ENCODE measurements at regions of chr12 and their contacts with region 1.

Region 1: GRCh38 chr12:105775343-105775742 is 363.4 kb downstream of the NUAK1 start:
- DNase-seq: no peak
- H3K4me3 ChIP-seq: no peak overlapping the region
- H3K4me3 Mint-ChIP-seq: no peak overlapping the region
- H3K27ac Mint-ChIP-seq: no peak overlapping the region
- H3K4me1 ChIP-seq: no peaks in the 10 kb centered on the region
- H3K4me1 Mint-ChIP-seq: no peaks in the 10 kb centered on the region
- H3K27me3 ChIP-seq: no peaks in the 10 kb centered on the region
- H3K27me3 Mint-ChIP-seq: no peaks in the 10 kb centered on the region
- CTCF ChIP-seq: no peak

Region 2: GRCh38 chr12:105741744-105742566 is 33.4 kb before region 1 on chr12:
- CTCF ChIA-PET with region 1: no interaction called
- POLR2A ChIA-PET with region 1: no interaction called
- intact Hi-C with region 1: no loop called
- DNase-seq: no peak
- H3K4me3 ChIP-seq: no peak overlapping the region
- H3K4me3 Mint-ChIP-seq: no peak overlapping the region
- H3K27ac Mint-ChIP-seq: no peak overlapping the region
- H3K4me1 ChIP-seq: no peaks in the 10 kb centered on the region
- H3K4me1 Mint-ChIP-seq: no peaks in the 10 kb centered on the region
- H3K27me3 ChIP-seq: no peaks in the 10 kb centered on the region
- H3K27me3 Mint-ChIP-seq: no peaks in the 10 kb centered on the region
- CTCF ChIP-seq: no peak

Region 3: DNA sequence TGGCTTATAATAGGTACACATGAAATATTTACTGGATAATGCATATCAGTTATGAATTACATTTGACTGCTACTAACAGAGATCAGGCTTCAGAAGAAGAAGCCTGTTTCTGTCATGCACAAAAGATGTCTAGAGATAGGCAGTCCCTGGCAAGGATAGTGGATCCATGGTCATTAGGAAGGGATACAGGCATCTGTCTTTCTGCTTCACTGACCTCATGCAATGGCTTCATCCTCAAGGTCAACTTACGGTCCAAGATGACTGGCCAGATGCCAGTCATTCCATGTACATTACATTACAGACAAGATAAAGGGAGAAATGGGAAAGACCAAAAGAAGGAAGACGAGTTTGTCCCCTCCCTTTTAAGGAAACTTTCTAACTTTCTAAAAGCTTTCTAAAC is 269.4 kb after region 1 on chr12:
- CTCF ChIA-PET with region 1: no interaction called
- POLR2A ChIA-PET with region 1: no interaction called
- intact Hi-C with region 1: no loop called
- DNase-seq: no peak
- H3K4me3 ChIP-seq: no peak overlapping the region
- H3K4me3 Mint-ChIP-seq: no peak overlapping the region
- H3K27ac Mint-ChIP-seq: no peak overlapping the region
- H3K4me1 ChIP-seq: peaks cover 7% of the 10 kb centered on the region; the same call in 1 of the 2 replicates
- H3K4me1 Mint-ChIP-seq: no peaks in the 10 kb centered on the region
- H3K27me3 ChIP-seq: no peaks in the 10 kb centered on the region
- H3K27me3 Mint-ChIP-seq: no peaks in the 10 kb centered on the region
- CTCF ChIP-seq: no peak

Region 4: GRCh38 chr12:106149096-106149784 is 373.9 kb after region 1 on chr12:
- CTCF ChIA-PET with region 1: interaction called, 10 read pairs
- POLR2A ChIA-PET with region 1: no interaction called
- intact Hi-C with region 1: no loop called
- DNase-seq: peak; percentile 57
- H3K4me3 ChIP-seq: no peak overlapping the region
- H3K4me3 Mint-ChIP-seq: no peak overlapping the region
- H3K27ac Mint-ChIP-seq: no peak overlapping the region
- H3K4me1 ChIP-seq: no peaks in the 10 kb centered on the region
- H3K4me1 Mint-ChIP-seq: peaks cover 9% of the 10 kb centered on the region
- H3K27me3 ChIP-seq: no peaks in the 10 kb centered on the region
- H3K27me3 Mint-ChIP-seq: no peaks in the 10 kb centered on the region
- CTCF ChIP-seq: peak; percentile 45 to 79

Measured in Caco-2 (cell line).